Esophagus muscularis mucosa (tissue), 4 donors: ENCODE measurements at regions of chrX and their contacts with region 1.

Region 1: DNA sequence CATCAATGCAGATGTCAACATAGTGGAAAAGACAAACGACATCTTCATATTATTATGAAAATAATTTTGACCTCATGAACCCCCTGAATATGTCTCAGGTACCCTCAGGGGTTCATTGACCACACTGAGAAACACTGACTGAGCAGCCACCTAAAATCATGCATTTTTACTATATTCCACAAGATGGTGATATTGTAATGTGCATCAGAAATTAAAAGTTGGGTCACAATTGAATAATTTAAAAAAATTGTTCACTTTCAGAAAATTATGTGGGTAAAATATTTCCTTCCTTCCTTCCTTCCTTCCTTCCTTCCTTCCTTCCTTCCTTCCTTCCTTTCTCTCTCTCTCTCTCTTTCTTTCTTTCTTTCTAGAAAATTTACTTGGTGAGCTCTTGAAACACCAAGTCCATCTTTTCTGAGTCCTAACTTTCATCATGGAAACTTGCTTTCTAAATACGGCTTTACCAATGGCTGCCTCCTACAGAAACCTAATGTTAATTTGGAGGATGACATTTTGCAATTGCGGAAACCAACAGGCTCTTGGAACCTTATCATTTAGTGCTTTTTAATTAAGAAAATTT is 103.6 kb downstream of the RTL3 start:
- DNase-seq: no peak
- H3K4me3 ChIP-seq: no peak overlapping the region
- H3K27ac ChIP-seq: no peak overlapping the region
- H3K4me1 ChIP-seq: no peaks in the 10 kb centered on the region
- H3K27me3 ChIP-seq: no peaks in the 10 kb centered on the region
- CTCF ChIP-seq: peak; percentile 44 to 52 (median 47)
- EP300 ChIP-seq: no peak
- POLR2A ChIP-seq: no peak

Region 2: GRCh38 chrX:78237134-78237533 is 318.4 kb before region 1 on chrX:
- intact Hi-C with region 1: no loop called
- DNase-seq: no peak
- H3K4me3 ChIP-seq: no peak overlapping the region
- H3K27ac ChIP-seq: no peak overlapping the region
- H3K4me1 ChIP-seq: no peaks in the 10 kb centered on the region
- H3K27me3 ChIP-seq: no peaks in the 10 kb centered on the region
- CTCF ChIP-seq: no peak
- EP300 ChIP-seq: no peak
- POLR2A ChIP-seq: no peak

Region 3: DNA sequence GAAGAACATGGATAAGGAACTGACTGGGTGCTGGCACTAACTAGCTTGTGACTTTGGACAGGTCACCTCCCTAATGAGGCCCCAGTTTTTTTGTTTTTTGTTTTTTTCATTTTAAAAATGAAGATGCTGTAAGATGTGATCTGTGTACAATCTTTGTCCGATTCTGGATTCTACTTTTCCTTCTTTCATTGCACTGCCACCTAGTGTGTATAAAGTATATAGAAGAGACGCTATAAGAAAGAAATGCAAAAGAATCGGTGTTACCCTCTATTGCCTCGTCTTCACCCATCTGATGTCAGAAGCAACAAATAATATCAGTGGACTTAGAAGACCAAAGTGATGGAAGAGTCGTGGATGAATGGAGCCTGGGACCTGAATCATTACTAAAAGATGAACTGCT is 331.1 kb after region 1 on chrX:
- intact Hi-C with region 1: loop called (anchors 2 kb)
- DNase-seq: no peak
- H3K4me3 ChIP-seq: no peak overlapping the region
- H3K27ac ChIP-seq: no peak overlapping the region
- H3K4me1 ChIP-seq: no peaks in the 10 kb centered on the region
- H3K27me3 ChIP-seq: no peaks in the 10 kb centered on the region
- CTCF ChIP-seq: peak; percentile 32 to 45 (median 35)
- EP300 ChIP-seq: no peak
- POLR2A ChIP-seq: no peak

Region 4: GRCh38 chrX:79081895-79082512 is 526.5 kb after region 1 on chrX:
- intact Hi-C with region 1: loop called (anchors 10 kb)
- DNase-seq: no peak
- H3K4me3 ChIP-seq: no peak overlapping the region
- H3K27ac ChIP-seq: no peak overlapping the region
- H3K4me1 ChIP-seq: peaks cover 0 to 5% (median 0%) of the 10 kb centered on the region in 4 donors
- H3K27me3 ChIP-seq: no peaks in the 10 kb centered on the region
- CTCF ChIP-seq: peak; percentile 56 to 67 (median 57)
- EP300 ChIP-seq: no peak
- POLR2A ChIP-seq: no peak